ENCODE measurements at regions of chr19 and their contacts with region 1.

Region 1: DNA sequence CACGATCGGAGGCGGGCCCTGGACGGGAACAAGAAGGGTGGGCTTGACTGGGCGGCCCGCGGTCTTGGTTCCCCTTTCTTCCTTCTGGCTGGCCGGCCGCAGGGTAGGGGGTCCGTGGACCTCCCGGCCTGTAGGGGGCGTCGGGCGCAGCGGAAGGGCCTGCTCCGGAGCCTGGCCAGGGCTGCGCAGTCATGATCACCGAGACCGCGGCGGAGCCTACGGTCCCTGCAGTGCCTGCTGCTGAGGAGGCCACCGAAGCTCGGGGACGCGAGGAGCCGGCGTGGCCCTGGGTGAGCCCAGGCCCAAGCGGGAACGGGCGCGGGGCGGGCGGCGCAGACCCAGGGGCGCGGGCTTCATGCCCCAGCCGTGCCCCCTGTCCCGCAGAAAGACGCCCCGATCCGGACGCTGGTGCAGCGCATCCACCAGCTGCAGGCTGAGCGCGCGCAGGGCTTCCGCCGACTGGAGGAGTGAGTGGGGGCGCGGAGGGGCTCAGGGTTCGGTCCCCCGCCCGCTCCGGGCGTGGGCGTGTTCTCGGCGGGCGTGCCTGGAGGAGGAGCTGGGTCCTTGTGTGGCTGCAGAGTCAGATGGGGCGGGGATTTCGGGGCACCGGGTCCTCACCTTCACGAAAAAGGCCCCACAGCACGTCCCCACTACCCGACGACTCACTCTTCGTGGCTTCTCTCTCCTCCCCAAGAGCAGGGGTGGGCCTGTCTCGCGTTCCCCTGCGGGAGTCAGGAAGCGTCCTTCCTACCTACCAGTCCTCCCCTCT is at the start of gene REX1BD:
- DNase-seq: peak; percentile 70 to 95 (median 87)
- ATAC-seq: peak; percentile 77
- H3K4me3 ChIP-seq: peak within 1 kb of the TSS; percentile 76
- H3K4me3 Mint-ChIP-seq: peak within 1 kb of the TSS; percentile 95
- H3K27ac ChIP-seq: peak within 1 kb of the TSS; percentile 80 to 88
- H3K27ac Mint-ChIP-seq: peak within 1 kb of the TSS; percentile 95
- H3K4me1 ChIP-seq: peaks cover 48% of the 10 kb centered on the region
- H3K4me1 Mint-ChIP-seq: peaks cover 42% of the 10 kb centered on the region
- H3K27me3 ChIP-seq: no peaks in the 10 kb centered on the region
- H3K27me3 Mint-ChIP-seq: no peaks in the 10 kb centered on the region
- CTCF ChIP-seq: peak; percentile 83
- total RNA-seq, gene REX1BD: 88.4 to 88.9 TPM

Region 2: GRCh38 chr19:18542936-18543815 is 45.6 kb before region 1 on chr19 and contains the start of gene FKBP8:
- CTCF ChIA-PET with region 1: interaction called, 8 read pairs
- POLR2A ChIA-PET with region 1: interaction called, 21 read pairs
- intact Hi-C with region 1: loop called (anchors 5 kb)
- DNase-seq: peak; percentile 89 to 97 (median 94)
- ATAC-seq: peak; percentile 93
- H3K4me3 ChIP-seq: peak within 1 kb of the TSS; percentile 63
- H3K4me3 Mint-ChIP-seq: peak within 1 kb of the TSS; percentile 98
- H3K27ac ChIP-seq: peak within 1 kb of the TSS; percentile 66 to 85
- H3K27ac Mint-ChIP-seq: peak within 1 kb of the TSS; percentile 96
- H3K4me1 ChIP-seq: peaks cover 28% of the 10 kb centered on the region
- H3K4me1 Mint-ChIP-seq: peaks cover 27% of the 10 kb centered on the region
- H3K27me3 ChIP-seq: no peaks in the 10 kb centered on the region
- H3K27me3 Mint-ChIP-seq: no peaks in the 10 kb centered on the region
- CTCF ChIP-seq: no peak
- total RNA-seq, gene FKBP8: 147 to 152 TPM

Region 3: GRCh38 chr19:18571564-18572300 is 17.1 kb before region 1 on chr19 and contains the start of gene UBA52:
- CTCF ChIA-PET with region 1: interaction called, 26 read pairs
- POLR2A ChIA-PET with region 1: interaction called, 120 read pairs
- intact Hi-C with region 1: loop called (anchors 1 to 2 kb)
- DNase-seq: peak; percentile 96 to 100 (median 98)
- ATAC-seq: peak; percentile 91
- H3K4me3 ChIP-seq: peak within 1 kb of the TSS; percentile 97
- H3K4me3 Mint-ChIP-seq: peak within 1 kb of the TSS; percentile 91
- H3K27ac ChIP-seq: peak within 1 kb of the TSS; percentile 89 to 94
- H3K27ac Mint-ChIP-seq: peak within 1 kb of the TSS; percentile 93
- H3K4me1 ChIP-seq: peaks cover 28% of the 10 kb centered on the region
- H3K4me1 Mint-ChIP-seq: peaks cover 20% of the 10 kb centered on the region
- H3K27me3 ChIP-seq: no peaks in the 10 kb centered on the region
- H3K27me3 Mint-ChIP-seq: no peaks in the 10 kb centered on the region
- CTCF ChIP-seq: no peak
- total RNA-seq, gene UBA52: 2,255 to 2,378 TPM

Region 4: DNA sequence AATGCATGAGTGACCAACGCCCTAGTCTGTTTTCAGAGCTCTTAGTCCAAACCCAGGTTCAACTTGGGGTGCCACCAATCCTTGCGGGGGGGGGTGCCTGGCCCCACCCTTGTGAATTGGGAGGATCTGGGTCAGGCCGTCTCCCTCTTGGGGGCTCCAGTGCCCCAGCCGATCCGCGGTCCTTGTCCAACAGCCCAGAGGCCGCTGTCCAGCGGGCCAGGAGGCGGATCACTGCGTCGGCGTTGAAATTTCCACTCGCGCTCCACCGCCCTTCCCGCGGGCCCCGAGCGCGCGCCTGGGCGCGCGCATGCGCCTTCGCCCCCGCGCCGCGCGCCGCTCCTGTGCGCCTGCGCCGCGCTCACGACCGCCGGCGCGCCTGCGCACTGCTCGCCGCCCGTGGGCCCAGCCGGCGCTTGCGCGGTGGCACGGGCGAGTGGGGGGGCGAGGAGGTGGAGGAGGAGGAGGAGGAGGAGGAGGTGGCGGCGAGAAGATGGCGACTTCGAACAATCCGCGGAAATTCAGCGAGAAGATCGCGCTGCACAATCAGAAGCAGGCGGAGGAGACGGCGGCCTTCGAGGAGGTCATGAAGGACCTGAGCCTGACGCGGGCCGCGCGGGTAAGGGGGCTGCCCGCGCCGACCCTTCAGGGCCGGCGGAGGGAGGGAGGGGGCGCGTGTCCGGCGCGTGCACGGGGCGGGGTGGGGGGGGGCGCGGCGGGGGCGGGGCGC is 94.6 kb after region 1 on chr19 and contains the start of gene CRTC1:
- CTCF ChIA-PET with region 1: interaction called, 6 read pairs
- POLR2A ChIA-PET with region 1: interaction called, 9 read pairs
- intact Hi-C with region 1: loop called in 1 of 2 experiments (anchors 5 kb)
- DNase-seq: peak; percentile 92 to 97 (median 94)
- ATAC-seq: peak; percentile 86
- H3K4me3 ChIP-seq: peak within 1 kb of the TSS; percentile 76
- H3K4me3 Mint-ChIP-seq: peak within 1 kb of the TSS; percentile 92
- H3K27ac ChIP-seq: peak within 1 kb of the TSS; percentile 29 to 65
- H3K27ac Mint-ChIP-seq: peak within 1 kb of the TSS; percentile 77
- H3K4me1 ChIP-seq: peaks cover 30% of the 10 kb centered on the region
- H3K4me1 Mint-ChIP-seq: peaks cover 36% of the 10 kb centered on the region
- H3K27me3 ChIP-seq: no peaks in the 10 kb centered on the region
- H3K27me3 Mint-ChIP-seq: no peaks in the 10 kb centered on the region
- CTCF ChIP-seq: no peak
- total RNA-seq, gene CRTC1: 11.8 to 12.2 TPM

Region 5: DNA sequence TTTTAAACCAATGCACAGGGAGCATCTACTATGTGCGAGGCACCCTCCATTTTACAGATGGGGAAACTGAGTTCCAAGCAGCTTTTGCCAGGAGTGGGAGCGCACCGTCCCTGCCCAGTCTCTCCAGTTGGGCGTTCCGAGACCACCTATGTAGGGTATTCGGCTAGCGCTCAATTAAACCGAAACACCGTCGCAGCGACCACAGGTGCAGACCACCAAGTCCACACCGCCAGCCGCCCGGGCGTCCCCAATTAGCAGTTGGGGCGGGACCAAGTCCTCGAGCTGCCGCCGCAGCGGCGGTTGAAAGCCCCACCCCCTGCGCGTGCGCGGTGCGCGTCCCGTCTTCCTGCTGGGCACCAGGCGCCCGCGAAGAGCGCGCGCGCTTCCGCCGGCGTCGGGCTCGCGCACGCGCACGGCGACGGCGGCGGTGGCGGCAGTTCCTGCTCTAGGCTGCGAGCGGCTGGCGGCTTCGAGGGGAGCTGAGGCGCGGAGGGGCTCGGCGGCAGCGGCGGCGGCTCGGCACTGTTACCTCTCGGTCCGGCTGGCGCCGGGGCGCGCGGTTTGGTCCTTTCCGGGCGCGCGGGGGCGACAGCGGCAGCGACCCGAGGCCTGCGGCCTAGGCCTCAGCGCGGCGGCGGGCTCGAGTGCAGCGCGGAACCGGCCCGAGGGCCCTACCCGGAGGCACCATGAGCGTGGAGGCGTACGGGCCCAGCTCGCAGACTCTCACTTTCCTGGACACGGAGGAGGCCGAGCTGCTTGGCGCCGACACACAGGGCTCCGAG is 242.9 kb after region 1 on chr19 and contains the start of gene UPF1:
- CTCF ChIA-PET with region 1: interaction called, 4 read pairs
- POLR2A ChIA-PET with region 1: interaction called, 20 read pairs
- intact Hi-C with region 1: loop called in 1 of 2 experiments (anchors 5 kb)
- DNase-seq: peak; percentile 90 to 99 (median 96)
- ATAC-seq: peak; percentile 75
- H3K4me3 ChIP-seq: peak within 1 kb of the TSS; percentile 64
- H3K4me3 Mint-ChIP-seq: peak within 1 kb of the TSS; percentile 89
- H3K27ac ChIP-seq: peak within 1 kb of the TSS; percentile 64 to 81
- H3K27ac Mint-ChIP-seq: peak within 1 kb of the TSS; percentile 88
- H3K4me1 ChIP-seq: peaks cover 45% of the 10 kb centered on the region
- H3K4me1 Mint-ChIP-seq: peaks cover 39% of the 10 kb centered on the region
- H3K27me3 ChIP-seq: no peaks in the 10 kb centered on the region
- H3K27me3 Mint-ChIP-seq: no peaks in the 10 kb centered on the region
- CTCF ChIP-seq: no peak
- total RNA-seq, gene UPF1: 146 to 150 TPM

Region 6: DNA sequence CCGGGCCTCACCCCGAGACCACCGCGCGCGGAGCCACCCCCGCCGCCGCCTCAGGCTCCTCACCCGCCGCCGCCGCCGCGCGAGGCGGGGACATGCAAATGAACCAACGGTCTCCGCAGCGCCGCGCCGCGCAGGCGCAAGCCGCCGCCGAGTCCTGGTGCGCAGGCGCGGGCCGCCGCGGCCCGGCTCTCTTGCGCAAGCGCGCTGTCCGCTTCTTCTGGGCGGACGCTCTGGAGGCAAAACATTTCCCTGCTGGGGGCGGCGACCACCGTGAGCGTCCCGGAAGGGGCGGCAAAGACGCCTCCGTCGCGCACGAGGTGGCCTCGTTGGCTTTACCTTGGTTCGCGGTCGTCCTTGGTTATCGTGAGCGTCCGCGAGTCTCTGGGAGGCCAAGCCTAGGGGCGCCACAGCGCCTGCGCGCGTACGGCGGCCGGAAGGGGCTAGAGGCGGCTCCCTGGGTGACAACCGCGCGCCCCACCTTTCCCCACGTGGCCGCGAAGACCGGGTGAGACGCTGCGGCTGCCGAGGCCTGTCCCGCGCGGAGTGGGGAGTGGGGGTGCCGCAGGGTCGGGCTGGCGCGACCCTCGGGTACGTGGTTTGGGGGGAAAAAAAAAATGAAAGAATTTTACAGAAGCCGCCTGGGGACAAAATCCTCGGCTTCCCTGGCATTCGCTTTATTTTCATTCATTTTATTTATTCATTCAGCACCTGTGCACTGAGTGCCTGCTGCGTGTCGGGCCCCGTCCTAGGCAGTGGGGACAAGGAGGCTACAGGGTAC is 444.8 kb after region 1 on chr19 and contains the starts of genes ARMC6 and SUGP2:
- CTCF ChIA-PET with region 1: no interaction called
- POLR2A ChIA-PET with region 1: no interaction called
- intact Hi-C with region 1: loop called in 1 of 2 experiments (anchors 10 kb)
- DNase-seq: peak; percentile 77 to 96 (median 87)
- ATAC-seq: peak; percentile 71
- H3K4me3 ChIP-seq: peak within 1 kb of the TSS; percentile 86
- H3K4me3 Mint-ChIP-seq: peak within 1 kb of the TSS; percentile 99
- H3K27ac ChIP-seq: peak within 1 kb of the TSS; percentile 77 to 81
- H3K27ac Mint-ChIP-seq: peak within 1 kb of the TSS; percentile 88
- H3K4me1 ChIP-seq: peaks cover 42% of the 10 kb centered on the region
- H3K4me1 Mint-ChIP-seq: peaks cover 38% of the 10 kb centered on the region
- H3K27me3 ChIP-seq: no peaks in the 10 kb centered on the region
- H3K27me3 Mint-ChIP-seq: no peaks in the 10 kb centered on the region
- CTCF ChIP-seq: no peak
- total RNA-seq, gene ARMC6: 5.9 to 6.0 TPM
- total RNA-seq, gene SUGP2: 106 to 110 TPM